ENCODE measurements at regions of chr10 and their contacts with region 1.

Region 1: DNA sequence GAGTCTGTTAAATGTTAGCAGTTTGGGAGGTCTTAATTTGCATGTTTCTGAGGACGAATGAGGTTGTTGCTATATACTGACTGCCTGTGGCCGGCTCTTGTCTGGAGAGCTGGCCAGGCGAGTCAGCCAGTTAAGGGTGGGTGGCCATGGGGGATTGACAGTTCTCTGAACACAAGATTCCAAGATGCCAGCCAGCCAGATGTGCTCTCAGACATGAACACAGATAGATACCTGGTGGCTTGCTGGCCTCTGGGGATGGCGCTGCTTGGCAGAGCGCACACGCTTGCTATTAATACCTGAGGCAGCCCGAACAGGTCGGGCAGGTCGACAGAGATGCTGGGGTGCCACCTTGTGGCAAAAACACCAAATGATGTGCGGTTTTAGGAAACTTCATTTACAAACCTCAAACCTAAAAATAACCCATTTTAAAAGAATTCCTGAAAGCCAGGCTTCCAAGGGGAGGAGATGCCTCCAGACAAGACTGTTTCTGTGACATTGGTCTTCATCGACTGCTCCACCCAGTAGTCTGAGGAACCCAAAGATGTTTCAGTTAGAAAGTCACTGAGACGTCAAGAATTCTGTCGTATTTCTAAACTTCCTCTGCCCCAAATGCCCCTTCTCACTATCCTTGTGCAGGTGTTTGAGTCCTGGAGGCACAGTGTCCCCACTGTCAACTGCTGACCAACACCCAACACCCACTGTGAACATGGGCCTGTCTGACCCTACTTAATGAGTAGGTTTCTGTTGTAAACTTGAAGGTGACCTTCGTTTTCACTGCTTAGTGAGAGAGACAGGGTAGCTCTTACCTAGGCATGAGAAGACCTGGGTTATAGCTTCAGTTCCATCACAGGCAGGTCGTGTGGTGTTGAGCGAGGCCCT is 123.4 kb downstream of the NT5C2 start:
- DNase-seq: peak; percentile 80 to 81
- H3K4me3 ChIP-seq: no peak overlapping the region
- H3K27ac ChIP-seq: no peak overlapping the region
- H3K4me1 ChIP-seq: no peaks in the 10 kb centered on the region
- H3K27me3 ChIP-seq: no peaks in the 10 kb centered on the region
- CTCF ChIP-seq: peak; percentile 33 to 87 (median 71)
- POLR2A ChIP-seq: no peak

Region 2: DNA sequence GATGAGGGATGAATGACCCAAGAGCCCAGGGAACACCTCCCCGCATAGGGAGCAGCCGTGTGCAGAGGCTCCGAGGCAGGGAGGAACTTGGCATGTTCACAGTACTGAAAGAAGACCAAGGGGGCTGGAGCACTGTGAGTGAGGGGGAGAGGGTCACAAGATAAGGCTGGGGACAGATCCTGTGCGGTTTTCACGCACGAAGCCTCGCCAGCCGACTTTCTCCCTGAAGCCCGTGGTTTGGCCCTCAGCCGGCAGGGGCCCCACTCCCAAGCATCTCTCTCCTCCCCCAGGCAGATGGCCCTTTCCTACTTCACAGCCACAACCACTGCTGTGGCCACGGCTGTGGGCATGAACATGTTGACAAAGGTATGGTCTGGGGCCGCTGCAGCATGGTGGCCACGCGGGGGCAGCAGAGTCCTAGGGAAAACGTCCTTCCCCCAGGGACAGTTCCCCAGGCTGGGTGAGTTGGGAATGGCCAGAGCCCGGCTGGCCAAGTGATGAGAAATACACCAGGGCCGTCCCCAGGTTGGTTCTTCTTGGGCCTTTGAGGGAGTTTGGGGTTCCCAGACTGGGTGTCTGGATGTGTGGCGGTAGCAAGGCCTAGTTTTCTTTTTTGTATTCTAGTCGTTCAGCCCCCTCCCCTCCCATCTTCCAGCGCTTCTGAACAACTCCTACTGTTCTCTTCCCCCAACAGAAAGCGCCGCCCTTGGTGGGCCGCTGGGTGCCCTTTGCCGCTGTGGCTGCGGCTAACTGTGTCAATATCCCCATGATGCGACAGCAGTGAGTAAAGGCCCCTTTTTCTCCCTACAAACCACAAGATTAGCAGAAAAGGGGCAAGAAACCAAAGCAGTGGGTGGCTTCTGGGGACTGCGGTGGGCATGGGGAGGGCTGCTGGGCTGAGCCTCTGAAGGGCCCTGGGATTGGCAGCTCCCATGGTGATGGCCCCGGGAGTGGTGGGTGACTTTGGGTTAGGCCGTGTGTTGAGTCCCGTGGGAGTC is 340.4 kb before region 1 on chr10:
- intact Hi-C with region 1: loop called (anchors 5 kb)
- DNase-seq: peak; percentile 90 to 91
- H3K4me3 ChIP-seq: no peak overlapping the region
- H3K27ac ChIP-seq: peak overlapping the region in 1 of 3 donors; percentile 79
- H3K4me1 ChIP-seq: peaks cover 18 to 32% of the 10 kb centered on the region in 2 donors
- H3K27me3 ChIP-seq: no peaks in the 10 kb centered on the region
- CTCF ChIP-seq: peak; percentile 77 to 94 (median 90)
- POLR2A ChIP-seq: no peak

Region 3: GRCh38 chr10:102835007-102835482 is 234.6 kb before region 1 on chr10:
- intact Hi-C with region 1: loop called (anchors 5 kb)
- DNase-seq: peak; percentile 83 to 85
- H3K4me3 ChIP-seq: no peak overlapping the region
- H3K27ac ChIP-seq: peak overlapping the region; percentile 17 to 91 (median 89)
- H3K4me1 ChIP-seq: peaks cover 26 to 30% of the 10 kb centered on the region in 2 donors
- H3K27me3 ChIP-seq: no peaks in the 10 kb centered on the region
- CTCF ChIP-seq: peak; percentile 69 to 95 (median 86)
- POLR2A ChIP-seq: no peak

Region 4: GRCh38 chr10:102869258-102870198 is 200.2 kb before region 1 on chr10 and contains the start of gene AS3MT:
- intact Hi-C with region 1: no loop called
- DNase-seq: peak; percentile 48 to 52
- H3K4me3 ChIP-seq: peak within 1 kb of the TSS; percentile 17 to 49 (median 25)
- H3K27ac ChIP-seq: peak within 1 kb of the TSS in 1 of 3 donors; percentile 18
- H3K4me1 ChIP-seq: peaks cover 6 to 11% of the 10 kb centered on the region in 2 donors
- H3K27me3 ChIP-seq: no peaks in the 10 kb centered on the region
- CTCF ChIP-seq: no peak
- POLR2A ChIP-seq: peak in 1 of 2 donors; percentile 48
- total RNA-seq, gene AS3MT: 9.8 to 19.2 (median 13.5) TPM

Region 5: DNA sequence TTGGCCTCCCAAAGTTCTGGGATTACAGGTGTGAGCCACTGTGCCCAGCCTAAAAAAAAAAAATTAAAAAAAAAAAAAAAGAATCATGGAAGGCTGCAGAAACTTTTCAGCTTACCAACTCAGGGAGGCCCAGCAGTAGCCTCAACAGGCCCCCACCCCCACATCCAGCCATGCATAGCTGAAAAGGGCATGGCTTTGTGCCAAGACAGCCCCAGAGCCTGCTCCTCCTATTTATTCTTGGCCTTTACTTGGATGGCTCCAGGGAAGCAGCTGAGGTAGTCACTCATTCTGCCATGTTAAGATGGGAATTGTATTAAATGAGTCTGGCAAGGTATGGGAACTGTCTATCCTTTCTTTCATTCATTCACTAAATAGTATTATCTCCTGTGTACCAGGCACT is 165.3 kb before region 1 on chr10:
- intact Hi-C with region 1: no loop called
- DNase-seq: peak; percentile 51 to 57
- H3K4me3 ChIP-seq: no peak overlapping the region
- H3K27ac ChIP-seq: no peak overlapping the region
- H3K4me1 ChIP-seq: peaks cover 0 to 3% of the 10 kb centered on the region in 2 donors
- H3K27me3 ChIP-seq: no peaks in the 10 kb centered on the region
- CTCF ChIP-seq: no peak
- POLR2A ChIP-seq: no peak

Region 6: DNA sequence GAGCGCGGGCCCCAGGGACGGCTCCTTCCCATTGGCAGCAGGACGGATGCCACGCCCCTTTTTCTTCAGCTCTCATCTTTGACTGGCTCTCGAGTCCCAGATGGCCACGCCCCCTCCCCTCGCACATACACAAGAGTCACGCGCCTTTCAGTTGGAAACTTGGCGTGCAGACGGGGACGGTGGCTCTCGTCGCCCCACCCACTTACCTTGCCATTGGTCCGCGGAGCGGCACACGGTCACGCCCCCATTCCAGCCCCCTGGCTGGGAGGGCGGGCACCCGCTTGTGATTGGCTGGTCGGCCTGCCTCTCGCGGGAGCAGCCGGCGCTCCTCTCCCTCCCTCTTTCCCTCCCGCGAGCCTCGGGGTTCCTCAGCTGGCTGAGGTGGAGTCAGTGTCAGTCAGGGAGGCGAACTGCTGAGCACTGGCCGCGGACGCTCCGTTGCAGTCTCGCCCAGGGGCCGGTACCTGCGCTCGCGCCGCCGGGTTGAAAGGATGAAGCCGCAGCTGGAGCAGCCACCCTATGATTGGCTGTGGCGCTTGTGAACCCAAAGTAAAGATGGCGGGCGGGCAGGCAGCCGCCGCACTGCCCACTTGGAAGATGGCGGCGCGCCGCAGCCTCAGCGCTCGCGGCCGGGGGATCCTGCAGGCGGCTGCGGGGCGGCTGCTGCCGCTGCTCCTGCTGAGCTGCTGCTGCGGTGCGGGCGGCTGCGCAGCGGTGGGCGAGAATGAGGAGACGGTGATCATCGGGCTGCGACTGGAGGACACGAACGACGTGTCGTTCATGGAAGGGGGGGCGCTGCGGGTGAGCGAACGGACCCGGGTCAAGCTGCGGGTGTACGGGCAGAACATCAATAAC is 151.5 kb before region 1 on chr10 and contains the start of gene CNNM2:
- intact Hi-C with region 1: loop called (anchors 2 kb)
- DNase-seq: peak; percentile 100
- H3K4me3 ChIP-seq: peak within 1 kb of the TSS; percentile 93 to 95 (median 94)
- H3K27ac ChIP-seq: peak within 1 kb of the TSS; percentile 90 to 96 (median 95)
- H3K4me1 ChIP-seq: peaks cover 28 to 30% of the 10 kb centered on the region in 2 donors
- H3K27me3 ChIP-seq: no peaks in the 10 kb centered on the region
- CTCF ChIP-seq: no peak
- POLR2A ChIP-seq: peak; percentile 15 to 87
- total RNA-seq, gene CNNM2: 15.2 to 19.2 (median 15.9) TPM

Region 7: GRCh38 chr10:103244663-103245271 is 175.1 kb after region 1 on chr10:
- intact Hi-C with region 1: loop called (anchors 10 kb)
- DNase-seq: peak; percentile 76 to 83
- H3K4me3 ChIP-seq: no peak overlapping the region
- H3K27ac ChIP-seq: no peak overlapping the region
- H3K4me1 ChIP-seq: peaks cover 12 to 21% of the 10 kb centered on the region in 2 donors
- H3K27me3 ChIP-seq: no peaks in the 10 kb centered on the region
- CTCF ChIP-seq: peak; percentile 71 to 94 (median 86)
- POLR2A ChIP-seq: no peak

Measured in thyroid gland (tissue), 4 donors.